Psoas muscle (tissue), 8 donors: ENCODE measurements at regions of chr15 and their contacts with region 1.

Region 1: GRCh38 chr15:84761607-84762131 is 13.3 kb downstream of the ZNF592 start:
- DNase-seq: no peak
- ATAC-seq: no peak
- H3K4me3 ChIP-seq: no peak overlapping the region
- H3K27ac ChIP-seq: peak overlapping the region; percentile 47
- H3K4me1 ChIP-seq: peaks cover 53% of the 10 kb centered on the region
- H3K27me3 ChIP-seq: no peaks in the 10 kb centered on the region
- CTCF ChIP-seq: no peak

Region 2: DNA sequence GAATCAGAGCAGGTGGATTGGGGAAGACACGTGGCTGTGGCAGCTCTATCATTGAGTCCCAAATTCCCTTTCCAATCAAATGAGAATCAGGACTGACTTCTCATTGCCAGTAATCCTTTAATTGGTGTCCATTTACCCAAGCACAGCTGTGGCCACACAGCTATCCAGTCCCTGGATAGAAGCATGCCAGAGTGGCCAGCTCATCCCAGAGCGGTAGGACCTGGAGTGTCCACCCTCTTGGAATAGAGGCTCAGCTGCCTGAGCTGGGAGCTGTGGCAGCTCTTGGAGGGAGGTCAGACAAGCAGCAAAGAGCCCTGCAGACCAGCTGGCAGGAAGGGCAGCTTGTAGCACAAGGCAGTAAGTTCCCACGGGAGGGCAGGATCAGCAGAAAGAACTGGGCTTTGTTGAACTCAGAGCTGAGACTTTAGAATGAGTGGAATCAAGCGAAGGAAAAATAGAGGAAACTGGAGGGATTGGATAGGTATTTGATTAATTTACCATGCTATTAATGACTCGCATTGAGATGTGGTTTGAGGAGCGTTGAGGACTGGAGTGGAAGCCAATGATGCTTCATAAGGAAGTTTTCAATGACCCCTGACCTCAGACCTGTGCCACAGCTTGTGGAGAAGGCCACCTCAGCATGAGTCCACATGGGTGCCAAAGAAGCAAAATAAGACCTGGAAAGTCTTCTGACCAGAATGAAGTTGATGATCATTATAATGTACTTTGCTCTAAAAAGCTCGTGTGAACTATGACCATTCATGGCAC is 48.6 kb after region 1 on chr15:
- intact Hi-C with region 1: loop called in 1 of 2 experiments (anchors 5 kb)
- DNase-seq: peak in 1 of 2 donors; percentile 47
- ATAC-seq: peak; percentile 75 to 93 (median 92)
- H3K4me3 ChIP-seq: no peak overlapping the region
- H3K27ac ChIP-seq: peak overlapping the region; percentile 56
- H3K4me1 ChIP-seq: peaks cover 11% of the 10 kb centered on the region
- H3K27me3 ChIP-seq: no peaks in the 10 kb centered on the region
- CTCF ChIP-seq: no peak

Region 3: DNA sequence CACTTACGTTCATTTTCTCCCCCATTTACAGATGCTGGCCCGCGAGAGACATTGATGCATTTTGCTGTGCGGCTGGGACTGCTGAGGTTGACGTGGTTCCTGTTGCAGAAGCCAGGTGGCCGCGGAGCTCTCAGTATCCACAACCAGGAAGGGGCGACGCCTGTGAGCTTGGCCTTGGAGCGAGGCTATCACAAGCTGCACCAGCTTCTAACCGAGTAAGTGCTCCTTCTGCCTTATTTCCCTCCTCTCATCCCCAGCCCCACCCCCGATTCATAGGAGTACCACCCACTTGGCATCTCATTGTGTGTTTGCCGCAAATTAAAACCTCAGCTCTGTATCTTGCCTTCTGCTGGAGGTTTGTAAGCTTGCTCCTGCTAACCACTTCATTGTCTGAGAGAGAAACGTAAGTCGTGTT is 782.1 kb after region 1 on chr15:
- intact Hi-C with region 1: no loop called
- DNase-seq: peak; percentile 32 to 60
- ATAC-seq: peak in 2 of 4 donors; percentile 13 to 44
- H3K4me3 ChIP-seq: peak overlapping the region; percentile 10
- H3K27ac ChIP-seq: no peak overlapping the region
- H3K4me1 ChIP-seq: peaks cover 3% of the 10 kb centered on the region
- H3K27me3 ChIP-seq: no peaks in the 10 kb centered on the region
- CTCF ChIP-seq: no peak